Prostate gland (tissue), 2 donors: ENCODE measurements at regions of chr17 and their contacts with region 1.

Region 1: GRCh38 chr17:27353461-27354050 is 59.6 kb downstream of the WSB1 start:
- DNase-seq: peak; percentile 83
- H3K4me3 ChIP-seq: peak overlapping the region; percentile 48 to 55
- H3K27ac ChIP-seq: peak overlapping the region; percentile 82 to 86
- H3K4me1 ChIP-seq: no peaks in the 10 kb centered on the region
- H3K27me3 ChIP-seq: no peaks in the 10 kb centered on the region
- CTCF ChIP-seq: peak; percentile 97 to 100 (median 98)
- POLR2A ChIP-seq: peak; percentile 89

Region 2: GRCh38 chr17:27236717-27237315 is 116.7 kb before region 1 on chr17:
- intact Hi-C with region 1: loop called (anchors 5 kb)
- DNase-seq: peak; percentile 84
- H3K4me3 ChIP-seq: no peak overlapping the region
- H3K27ac ChIP-seq: no peak overlapping the region
- H3K4me1 ChIP-seq: no peaks in the 10 kb centered on the region
- H3K27me3 ChIP-seq: no peaks in the 10 kb centered on the region
- CTCF ChIP-seq: peak; percentile 82 to 94 (median 92)
- POLR2A ChIP-seq: no peak

Region 3: DNA sequence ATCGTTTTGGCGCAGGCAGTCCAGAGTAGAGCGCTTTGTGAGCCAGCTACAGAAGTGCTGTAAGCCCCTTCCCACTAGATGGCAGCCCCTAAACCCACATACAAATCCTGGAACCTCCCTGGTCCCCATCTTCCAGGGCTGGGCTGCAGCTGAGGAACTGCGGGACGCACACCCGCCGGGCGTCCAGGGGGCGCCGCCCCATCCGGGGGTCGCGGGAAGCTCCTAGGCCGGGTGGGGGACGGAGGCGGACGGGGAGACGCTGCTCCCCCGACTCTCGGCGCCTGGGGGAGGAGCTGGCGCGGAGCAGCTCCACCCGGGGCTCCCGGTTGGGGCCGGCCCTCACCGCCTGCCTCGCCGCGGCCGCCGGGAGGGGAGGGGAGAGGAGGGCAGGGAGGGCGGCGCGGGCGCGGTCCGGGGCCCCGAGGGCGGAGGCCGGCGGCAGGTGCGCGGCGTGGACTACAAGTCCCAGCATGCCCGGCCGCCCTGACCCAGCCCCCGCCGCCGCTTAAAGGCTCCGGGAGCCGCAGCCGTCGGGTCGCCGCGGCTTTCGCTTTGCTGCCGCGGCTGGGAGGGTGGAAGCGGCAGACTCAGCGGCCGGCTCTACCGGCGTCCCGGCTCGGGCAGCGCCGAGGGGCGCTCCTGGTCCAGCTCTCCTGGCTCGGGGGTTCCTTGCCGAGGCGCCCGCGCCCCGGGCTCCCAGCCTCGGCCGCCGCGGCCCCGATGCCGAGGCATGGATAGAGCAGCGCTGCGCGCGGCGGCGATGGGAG is 102.5 kb after region 1 on chr17 and contains the start of gene KSR1:
- intact Hi-C with region 1: loop called (anchors 10 kb)
- DNase-seq: peak; percentile 75
- H3K4me3 ChIP-seq: peak within 1 kb of the TSS; percentile 63 to 70
- H3K27ac ChIP-seq: peak within 1 kb of the TSS; percentile 74 to 80
- H3K4me1 ChIP-seq: peaks cover 2% of the 10 kb centered on the region
- H3K27me3 ChIP-seq: no peaks in the 10 kb centered on the region
- CTCF ChIP-seq: peak in 3 of 4 experiments; percentile 24 to 44 (median 30)
- POLR2A ChIP-seq: peak; percentile 75
- total RNA-seq, gene KSR1: 11.5 to 23.7 TPM

Region 4: GRCh38 chr17:27494192-27495091 is 140.9 kb after region 1 on chr17:
- intact Hi-C with region 1: loop called (anchors 10 kb)
- DNase-seq: peak; percentile 93
- H3K4me3 ChIP-seq: peak overlapping the region; percentile 13 to 14
- H3K27ac ChIP-seq: peak overlapping the region; percentile 72 to 79
- H3K4me1 ChIP-seq: peaks cover 4% of the 10 kb centered on the region
- H3K27me3 ChIP-seq: no peaks in the 10 kb centered on the region
- CTCF ChIP-seq: peak in 3 of 4 experiments; percentile 29 to 68 (median 57)
- POLR2A ChIP-seq: peak; percentile 73